ENCODE measurements at regions of chr2 and their contacts with region 1.

Region 1: GRCh38 chr2:135424839-135425238 is 106.2 kb downstream of the ZRANB3 start:
- DNase-seq: no peak

Region 2: DNA sequence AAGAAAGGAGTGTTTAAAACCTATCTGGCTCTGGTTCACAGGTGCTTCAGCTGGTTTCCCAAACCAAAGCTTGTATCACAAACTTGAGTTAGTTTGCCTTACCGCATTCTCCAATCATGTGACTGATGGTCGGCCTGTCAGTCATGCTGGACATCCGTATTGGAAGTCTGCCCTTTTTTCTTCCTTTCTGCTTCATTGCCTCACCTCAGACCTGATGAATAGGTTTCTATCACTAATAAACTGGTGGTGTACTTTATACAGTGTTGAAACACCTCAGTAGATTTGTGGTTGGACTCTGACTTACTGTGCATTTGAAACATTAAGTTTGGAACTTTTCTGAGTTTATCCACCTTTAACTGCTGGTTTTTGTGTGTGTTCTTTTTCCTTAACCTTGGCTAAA is 190.6 kb after region 1 on chr2:
- intact Hi-C with region 1: no loop called
- DNase-seq: no peak

Region 3: GRCh38 chr2:135797497-135798274 is 372.8 kb after region 1 on chr2:
- intact Hi-C with region 1: loop called in 1 of 2 experiments (anchors 5 kb)
- DNase-seq: peak; percentile 90

Measured in posterior vena cava (tissue), 2 donors.